AG04450 (cell line): ENCODE measurements at regions of chr3 and their contacts with region 1.

Region 1: DNA sequence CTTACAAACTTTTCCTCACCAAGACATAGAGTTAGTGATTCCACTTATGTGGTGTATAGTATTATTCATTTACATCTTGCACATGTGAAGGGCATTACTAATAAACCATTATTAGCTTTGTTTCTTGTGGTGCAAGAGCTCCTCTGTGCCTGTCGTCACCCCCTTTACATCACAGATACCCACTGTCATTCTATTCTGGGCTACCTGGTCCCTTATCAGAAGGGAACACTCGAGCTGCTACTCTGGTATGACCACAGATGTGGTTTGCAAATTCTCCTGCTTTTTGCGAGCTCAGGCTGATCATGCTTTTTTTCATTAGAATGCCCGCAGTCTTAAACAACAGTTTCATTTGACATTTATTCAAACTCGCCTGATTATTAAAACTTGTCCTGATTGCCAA is 13.9 kb upstream of the SENP2 start:
- DNase-seq: no peak
- H3K4me3 ChIP-seq: no peak overlapping the region
- H3K27ac ChIP-seq: peak overlapping the region; percentile 11
- H3K27me3 ChIP-seq: no peaks in the 10 kb centered on the region
- CTCF ChIP-seq: no peak

Region 2: GRCh38 chr3:185353823-185354614 is 218.2 kb before region 1 on chr3:
- CTCF ChIA-PET with region 1: interaction called, 11 read pairs
- POLR2A ChIA-PET with region 1: no interaction called
- DNase-seq: no peak
- H3K4me3 ChIP-seq: no peak overlapping the region
- H3K27ac ChIP-seq: no peak overlapping the region
- H3K27me3 ChIP-seq: no peaks in the 10 kb centered on the region
- CTCF ChIP-seq: peak; percentile 64

Region 3: GRCh38 chr3:185460719-185461350 is 111.3 kb before region 1 on chr3:
- CTCF ChIA-PET with region 1: interaction called, 21 read pairs
- POLR2A ChIA-PET with region 1: no interaction called
- DNase-seq: no peak
- H3K4me3 ChIP-seq: no peak overlapping the region
- H3K27ac ChIP-seq: no peak overlapping the region
- H3K27me3 ChIP-seq: no peaks in the 10 kb centered on the region
- CTCF ChIP-seq: peak; percentile 49

Region 4: DNA sequence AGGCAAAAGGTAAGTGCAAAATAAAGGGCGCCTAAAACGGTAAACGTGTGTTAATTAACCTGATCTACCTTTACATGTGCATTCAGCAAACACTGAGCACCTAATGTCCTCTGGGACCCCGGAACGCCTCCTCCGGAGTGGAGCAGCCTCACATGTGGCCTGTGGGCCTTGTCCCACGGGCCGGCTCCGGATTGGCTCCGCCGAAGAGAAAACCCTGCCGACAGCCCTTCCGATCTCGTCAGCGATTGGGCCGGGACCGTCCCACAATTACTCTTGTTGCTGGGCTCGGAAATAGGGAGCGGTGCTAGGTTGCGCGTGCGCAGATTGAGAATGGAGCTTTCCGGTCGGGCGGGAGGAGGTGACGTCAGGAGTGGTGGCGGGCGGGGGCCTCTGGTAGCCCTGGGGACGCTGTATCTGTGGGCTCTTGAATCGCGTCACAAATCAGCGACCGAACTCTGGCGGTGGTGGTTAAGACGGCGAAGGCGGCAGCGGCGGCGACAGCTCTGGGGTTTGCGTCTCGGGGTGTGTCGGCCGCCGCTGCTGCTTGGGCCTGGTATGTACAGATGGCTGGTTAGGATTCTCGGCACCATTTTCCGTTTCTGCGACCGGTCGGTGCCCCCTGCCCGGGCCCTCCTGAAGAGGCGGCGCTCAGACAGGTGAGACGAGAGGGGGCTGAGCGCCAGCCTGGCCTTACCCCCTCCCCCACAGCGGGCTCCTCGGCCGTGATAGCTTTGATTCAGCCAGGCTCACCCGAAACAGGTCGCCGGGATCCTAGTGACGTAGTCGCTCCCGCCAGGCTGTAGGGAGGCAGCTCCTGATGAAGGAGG is 13.9 kb after region 1 on chr3 and contains the start of gene SENP2:
- CTCF ChIA-PET with region 1: interaction called, 16 read pairs
- POLR2A ChIA-PET with region 1: no interaction called
- DNase-seq: peak; percentile 97
- H3K4me3 ChIP-seq: peak within 1 kb of the TSS; percentile 91
- H3K27ac ChIP-seq: peak within 1 kb of the TSS; percentile 89
- H3K27me3 ChIP-seq: no peaks in the 10 kb centered on the region
- CTCF ChIP-seq: no peak
- polyA plus RNA-seq, gene SENP2: 18.2 and 28.1 TPM in 2 replicates